ENCODE measurements at regions of chr3 and their contacts with region 1.

Region 1: DNA sequence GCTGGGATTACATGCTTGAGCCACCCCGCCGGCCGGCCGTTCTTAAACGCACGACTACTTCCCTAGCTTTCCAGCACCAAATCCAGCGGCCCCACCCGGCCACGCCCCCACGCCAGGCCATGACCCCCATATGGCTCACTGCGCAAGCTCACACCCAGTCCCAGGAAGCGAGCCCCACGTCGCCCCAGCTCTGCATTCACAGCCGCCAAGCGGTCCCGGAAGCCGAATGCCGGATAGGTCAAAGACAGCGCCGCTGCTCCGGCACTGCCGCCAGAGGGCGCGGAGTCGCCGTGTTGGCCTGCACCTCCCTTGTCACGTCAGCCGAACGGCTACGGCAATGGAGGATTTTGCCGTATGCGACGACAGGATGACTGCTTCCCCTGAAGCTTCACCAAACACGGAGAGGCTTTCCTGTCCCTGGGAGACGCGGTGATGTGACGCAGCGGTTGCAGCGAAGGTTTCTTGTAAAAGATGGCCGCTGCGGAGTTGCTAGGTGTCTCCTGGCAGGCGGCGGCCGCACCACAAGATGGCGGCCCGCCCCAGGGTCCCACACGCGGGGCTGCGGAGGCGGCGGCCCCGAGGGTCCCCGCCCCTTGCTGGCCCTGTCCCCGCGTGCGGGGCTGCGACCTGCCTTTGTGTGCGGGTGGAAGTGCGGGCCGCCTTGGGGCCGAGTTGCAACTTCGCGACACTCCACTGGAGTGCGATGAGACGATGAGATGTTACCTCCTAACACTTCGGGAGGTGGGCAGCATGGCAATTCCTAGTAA is 30.2 kb upstream of the RPN1 start:
- DNase-seq: peak; percentile 96 to 100 (median 100)
- ATAC-seq: peak; percentile 98
- H3K4me3 ChIP-seq: peak overlapping the region; percentile 48 to 62
- H3K27ac ChIP-seq: peak overlapping the region; percentile 95 to 96
- H3K4me1 ChIP-seq: peaks cover 4 to 21% of the 10 kb centered on the region in 2 donors
- H3K27me3 ChIP-seq: no peaks in the 10 kb centered on the region
- CTCF ChIP-seq: peak; percentile 87 to 97

Region 2: GRCh38 chr3:128787256-128788240 is 106.8 kb after region 1 on chr3:
- intact Hi-C with region 1: loop called in 1 of 2 experiments (anchors 10 kb)
- DNase-seq: no peak
- ATAC-seq: no peak
- H3K4me3 ChIP-seq: no peak overlapping the region
- H3K27ac ChIP-seq: peak overlapping the region in 1 of 2 donors; percentile 77
- H3K4me1 ChIP-seq: peaks cover 15 to 100% of the 10 kb centered on the region in 2 donors
- H3K27me3 ChIP-seq: no peaks in the 10 kb centered on the region
- CTCF ChIP-seq: peak in 1 of 2 donors; percentile 23

Region 3: GRCh38 chr3:128845778-128846485 is 165.1 kb after region 1 on chr3:
- intact Hi-C with region 1: loop called in 1 of 2 experiments (anchors 10 kb)
- DNase-seq: peak; percentile 65 to 97 (median 86)
- ATAC-seq: peak; percentile 96
- H3K4me3 ChIP-seq: peak overlapping the region; percentile 28 to 42
- H3K27ac ChIP-seq: peak overlapping the region in 1 of 2 donors; percentile 70
- H3K4me1 ChIP-seq: peaks cover 0 to 25% of the 10 kb centered on the region in 2 donors
- H3K27me3 ChIP-seq: no peaks in the 10 kb centered on the region
- CTCF ChIP-seq: peak; percentile 50 to 62

Region 4: GRCh38 chr3:128922804-128923459 is 242.1 kb after region 1 on chr3:
- intact Hi-C with region 1: no loop called
- DNase-seq: no peak
- ATAC-seq: no peak
- H3K4me3 ChIP-seq: no peak overlapping the region
- H3K27ac ChIP-seq: no peak overlapping the region
- H3K4me1 ChIP-seq: no peaks in the 10 kb centered on the region
- H3K27me3 ChIP-seq: no peaks in the 10 kb centered on the region
- CTCF ChIP-seq: no peak